Panc1 (cell line): ENCODE measurements at regions of chr17 and their contacts with region 1.

Region 1: DNA sequence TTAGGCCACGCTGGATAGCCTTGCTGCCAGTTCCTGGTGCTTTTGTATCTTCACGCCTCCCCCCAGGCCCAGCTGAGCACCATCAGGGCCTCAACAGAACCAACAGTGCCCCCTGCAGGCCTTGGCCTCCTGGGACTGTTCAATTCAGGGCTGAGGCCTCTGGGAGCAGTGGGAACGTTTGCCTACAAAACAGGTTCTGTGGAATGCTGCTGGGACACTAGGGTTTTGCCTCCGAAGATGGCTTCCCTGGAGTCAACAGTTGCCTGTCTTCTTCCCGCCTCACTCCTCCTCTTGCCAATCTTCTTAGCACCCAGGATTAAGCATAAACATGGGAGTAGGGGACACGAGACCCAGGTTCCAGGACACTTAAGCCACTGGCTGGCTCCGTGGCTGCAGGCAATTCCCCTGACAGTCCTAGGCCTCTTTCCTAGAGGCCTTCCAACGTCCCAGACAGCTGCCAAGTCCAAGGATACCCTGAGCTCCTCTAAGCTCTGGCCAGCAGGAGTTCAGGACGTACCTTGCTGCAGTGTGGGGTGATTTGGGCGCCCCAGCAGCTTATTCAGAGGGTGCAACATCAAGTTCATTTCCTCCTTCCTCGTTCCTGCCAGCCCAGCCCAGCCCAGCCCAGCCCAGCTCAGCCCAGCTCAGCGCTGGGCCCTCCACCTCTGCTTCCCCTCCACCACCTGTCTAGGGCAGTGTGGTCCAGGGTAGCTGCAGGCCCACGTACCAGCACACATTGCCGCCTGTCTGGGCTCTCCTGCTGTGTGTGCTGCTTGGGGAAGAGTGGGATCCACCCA is 246.6 kb upstream of the RPL38 start:
- DNase-seq: no peak
- ATAC-seq: peak; percentile 87
- H3K4me3 ChIP-seq: no peak overlapping the region
- H3K27ac ChIP-seq: no peak overlapping the region
- H3K4me1 ChIP-seq: no peaks in the 10 kb centered on the region
- H3K27me3 ChIP-seq: peaks cover 12% of the 10 kb centered on the region
- CTCF ChIP-seq: peak; percentile 72

Region 2: DNA sequence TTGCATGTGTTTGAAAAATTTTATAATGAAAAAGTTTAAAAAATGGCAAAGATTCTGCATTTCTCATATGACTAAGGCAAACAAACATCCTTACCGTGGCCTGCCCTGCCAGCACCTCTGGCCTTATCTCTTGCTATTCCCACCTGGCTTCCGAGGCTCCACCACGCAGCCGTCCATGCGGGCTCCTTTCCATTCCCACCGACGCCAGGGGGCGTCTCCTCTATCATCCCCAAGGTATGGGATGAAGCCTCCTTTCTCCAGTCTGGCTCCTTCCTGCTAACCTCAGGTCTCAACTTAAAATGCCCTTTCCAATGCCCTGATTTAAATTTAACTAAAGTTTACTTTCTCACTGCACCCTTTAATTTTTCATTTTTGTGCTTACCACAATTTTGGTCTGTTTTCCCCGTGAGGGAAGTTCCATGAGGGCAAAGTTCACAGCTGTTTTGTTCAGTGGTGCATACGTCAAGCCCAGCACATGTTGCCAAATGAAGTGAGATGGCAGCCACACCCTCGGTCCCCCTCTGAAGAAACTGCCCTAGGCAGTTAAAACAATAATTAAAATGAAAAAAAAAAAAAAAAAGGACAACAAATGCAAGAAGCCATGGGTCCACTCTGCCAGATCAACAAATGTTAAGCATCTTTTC is 299.3 kb before region 1 on chr17:
- CTCF ChIA-PET with region 1: no interaction called
- POLR2A ChIA-PET with region 1: no interaction called
- in situ Hi-C with region 1: no loop called
- intact Hi-C with region 1: loop called (anchors 10 kb)
- DNase-seq: no peak
- ATAC-seq: peak; percentile 96
- H3K4me3 ChIP-seq: no peak overlapping the region
- H3K27ac ChIP-seq: no peak overlapping the region
- H3K4me1 ChIP-seq: no peaks in the 10 kb centered on the region
- H3K27me3 ChIP-seq: peaks cover 23% of the 10 kb centered on the region
- CTCF ChIP-seq: peak; percentile 88

Region 3: DNA sequence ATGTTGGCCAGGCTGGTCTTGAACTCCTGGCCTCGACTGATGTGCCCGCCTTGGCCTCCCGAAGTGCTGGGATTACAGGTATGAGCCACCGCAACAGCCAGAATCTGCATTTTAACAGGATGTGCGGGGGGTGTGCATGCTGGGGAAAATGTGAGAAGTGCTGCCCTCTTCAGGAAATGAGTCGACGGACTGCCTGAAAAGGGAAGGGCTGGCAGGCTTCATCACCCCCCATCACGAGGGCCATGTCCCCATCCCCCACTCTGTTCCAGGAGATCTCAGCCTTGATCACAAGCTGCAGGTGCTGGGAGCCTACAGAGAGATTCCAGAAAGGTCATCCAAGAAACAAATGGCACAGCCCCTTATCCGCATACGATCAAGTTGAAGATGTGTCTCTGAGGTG is 51.3 kb after region 1 on chr17:
- CTCF ChIA-PET with region 1: no interaction called
- POLR2A ChIA-PET with region 1: no interaction called
- in situ Hi-C with region 1: no loop called
- intact Hi-C with region 1: no loop called
- DNase-seq: no peak
- ATAC-seq: peak; percentile 78
- H3K4me3 ChIP-seq: no peak overlapping the region
- H3K27ac ChIP-seq: no peak overlapping the region
- H3K4me1 ChIP-seq: no peaks in the 10 kb centered on the region
- H3K27me3 ChIP-seq: peaks cover 29% of the 10 kb centered on the region
- CTCF ChIP-seq: peak; percentile 74

Region 4: DNA sequence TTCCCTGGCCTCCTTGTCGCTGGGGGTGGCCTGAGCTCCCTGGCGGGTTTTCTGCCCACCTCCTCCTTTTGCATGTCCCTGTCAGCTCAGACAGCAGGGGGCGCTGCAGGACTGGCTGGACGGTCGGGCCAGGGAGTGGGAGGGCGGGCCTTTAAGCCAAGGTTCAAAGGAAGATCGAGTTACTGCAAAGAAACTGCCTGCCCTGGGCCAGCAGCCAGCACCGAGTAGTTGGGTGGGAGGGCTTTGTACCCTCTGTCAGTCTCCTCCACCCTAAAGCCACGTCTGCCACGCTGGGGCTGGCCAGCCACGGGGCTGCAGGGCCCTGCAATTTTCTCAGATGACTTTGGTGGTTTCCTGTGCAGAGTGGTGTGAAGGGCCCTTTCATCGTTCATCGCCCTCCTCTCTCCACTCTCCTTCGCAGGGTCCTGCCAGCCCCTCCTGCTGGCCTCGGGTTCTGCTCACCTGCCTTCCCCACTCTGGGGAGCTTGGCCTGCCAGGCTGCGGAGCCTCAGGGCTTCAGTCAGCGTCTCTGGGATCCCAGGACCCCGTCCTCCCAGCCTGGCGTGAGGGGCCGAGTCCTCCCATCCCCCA is 422.7 kb after region 1 on chr17:
- CTCF ChIA-PET with region 1: no interaction called
- POLR2A ChIA-PET with region 1: no interaction called
- in situ Hi-C with region 1: no loop called
- intact Hi-C with region 1: no loop called
- DNase-seq: no peak
- ATAC-seq: peak; percentile 92
- H3K4me3 ChIP-seq: peak overlapping the region in 1 of 2 experiments; percentile 16; a peak in 1 of 4 replicates
- H3K27ac ChIP-seq: no peak overlapping the region; the same call in 1 of the 2 replicates
- H3K4me1 ChIP-seq: peaks cover 10% of the 10 kb centered on the region
- H3K27me3 ChIP-seq: peaks cover 3% of the 10 kb centered on the region
- CTCF ChIP-seq: peak; percentile 97